ENCODE measurements at regions of chr7 and their contacts with region 1.

Region 1: DNA sequence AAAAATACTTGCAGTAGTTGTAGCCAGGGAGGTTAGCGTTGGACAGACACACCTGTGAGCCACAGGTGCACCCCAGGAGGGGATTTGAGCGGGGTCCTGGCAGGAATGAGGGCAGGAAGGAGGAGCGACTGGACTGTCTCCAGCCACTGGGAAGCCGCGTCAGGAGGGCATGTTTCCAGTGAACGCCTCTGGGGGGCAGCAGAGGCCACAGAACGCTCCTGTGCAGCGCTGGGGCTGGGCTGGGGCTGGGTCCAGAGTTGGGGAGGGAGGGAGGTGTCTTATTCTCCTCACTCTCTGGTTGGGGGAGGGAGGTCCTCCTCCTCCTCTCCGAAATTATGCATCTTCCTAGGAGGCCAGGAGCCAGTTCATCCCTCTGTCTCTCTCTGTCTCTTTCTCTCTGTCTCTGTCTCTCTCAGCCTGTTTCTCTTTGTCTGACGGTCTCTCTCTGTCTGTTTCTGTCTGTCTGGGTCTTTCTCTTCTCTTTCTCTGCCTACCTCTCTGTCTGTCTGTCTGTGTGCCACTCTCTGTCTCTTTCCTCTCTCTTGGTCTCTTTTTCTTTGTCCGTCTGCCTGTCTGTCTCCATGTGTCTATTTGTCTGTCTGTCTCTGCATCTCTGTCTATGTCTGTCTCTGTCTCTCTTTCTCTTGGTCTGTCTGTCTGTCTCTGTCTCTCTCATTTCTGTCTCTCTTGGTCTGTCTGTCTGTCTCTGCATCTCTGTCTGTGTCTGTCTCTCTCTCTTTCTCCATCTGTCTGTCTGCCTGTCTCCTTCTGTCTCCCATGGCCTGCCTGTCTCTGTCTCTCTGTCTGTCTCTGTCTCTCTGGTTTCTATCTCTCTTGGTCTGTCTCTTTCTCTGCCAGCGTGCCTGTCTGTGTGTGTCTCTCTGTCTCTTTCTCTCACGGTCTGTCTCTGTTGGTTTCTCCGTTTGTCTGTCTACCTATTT is 9.9 kb upstream of the PSMG3 start:
- DNase-seq: peak; percentile 65 to 86 (median 81)
- H3K4me3 ChIP-seq: no peak overlapping the region
- H3K27ac ChIP-seq: no peak overlapping the region
- H3K4me1 ChIP-seq: no peaks in the 10 kb centered on the region
- H3K27me3 ChIP-seq: no peaks in the 10 kb centered on the region
- CTCF ChIP-seq: peak; percentile 87

Region 2: DNA sequence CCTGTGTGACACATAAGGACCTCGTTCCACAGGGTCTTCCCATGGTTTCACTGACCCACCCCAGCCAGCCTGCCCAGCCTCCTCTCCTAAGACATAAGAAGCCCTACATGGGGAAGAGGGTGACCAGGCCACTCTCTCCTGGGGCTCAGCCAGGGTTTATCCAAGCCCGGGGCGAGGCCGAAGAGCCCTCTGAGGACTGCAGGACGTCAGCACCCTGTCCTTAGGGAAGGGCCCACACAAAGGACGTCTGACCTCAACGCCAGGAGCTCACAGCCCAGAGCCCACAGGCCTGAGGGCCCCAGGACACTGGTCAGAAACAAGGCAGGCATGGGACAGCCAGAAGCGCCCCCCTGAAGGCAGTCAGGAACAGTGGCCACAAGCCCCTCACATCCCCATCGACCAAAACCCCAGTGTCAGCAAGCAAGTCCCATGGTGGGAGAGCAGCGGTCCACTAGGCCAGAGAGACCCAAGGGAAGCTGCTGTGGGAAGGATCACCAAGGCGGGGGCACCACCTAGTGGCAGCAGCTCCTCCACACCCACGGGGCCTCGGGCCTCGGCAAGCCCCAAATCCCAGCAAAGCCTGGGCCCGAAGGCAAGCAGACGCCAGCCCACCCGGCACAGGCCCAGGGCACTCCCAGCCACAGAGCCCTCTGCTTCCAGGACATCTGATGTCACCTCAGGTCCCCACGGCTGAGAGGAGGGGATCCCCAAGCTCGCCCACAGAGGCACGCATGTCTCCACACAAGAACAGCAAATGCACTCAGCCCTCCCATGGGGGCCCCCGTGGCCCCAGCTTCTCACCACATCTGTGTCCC is 629.6 kb after region 1 on chr7:
- intact Hi-C with region 1: loop called (anchors 10 kb)
- DNase-seq: peak; percentile 83 to 92 (median 87)
- H3K4me3 ChIP-seq: no peak overlapping the region
- H3K27ac ChIP-seq: no peak overlapping the region
- H3K4me1 ChIP-seq: peaks cover 0 to 3% (median 0%) of the 10 kb centered on the region in 3 donors
- H3K27me3 ChIP-seq: no peaks in the 10 kb centered on the region
- CTCF ChIP-seq: peak; percentile 76

Measured in kidney (tissue), 22 donors.